GM18951 (cell line): ENCODE measurements at regions of chr5 and their contacts with region 1.

Region 1: DNA sequence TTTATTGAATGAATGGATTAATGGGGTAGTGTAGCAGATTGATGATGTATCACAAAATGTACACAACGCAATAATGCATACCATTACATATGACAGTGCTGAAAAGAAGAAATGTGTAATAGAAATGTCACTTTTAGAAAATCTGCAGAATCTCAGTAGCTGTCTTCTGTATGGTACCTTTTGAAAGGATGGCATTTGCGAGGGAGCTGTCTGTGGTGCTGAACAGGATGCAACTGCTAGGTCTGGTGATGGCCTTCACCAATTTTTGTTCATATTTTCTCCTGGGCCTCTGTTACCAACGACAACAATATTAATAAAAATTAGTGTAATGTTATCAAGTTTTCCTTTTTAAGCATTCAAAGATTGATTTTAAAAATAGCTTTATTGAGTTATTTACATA is 36.2 kb upstream of the OTULIN start:
- POLR2A ChIP-seq: no peak

Region 2: DNA sequence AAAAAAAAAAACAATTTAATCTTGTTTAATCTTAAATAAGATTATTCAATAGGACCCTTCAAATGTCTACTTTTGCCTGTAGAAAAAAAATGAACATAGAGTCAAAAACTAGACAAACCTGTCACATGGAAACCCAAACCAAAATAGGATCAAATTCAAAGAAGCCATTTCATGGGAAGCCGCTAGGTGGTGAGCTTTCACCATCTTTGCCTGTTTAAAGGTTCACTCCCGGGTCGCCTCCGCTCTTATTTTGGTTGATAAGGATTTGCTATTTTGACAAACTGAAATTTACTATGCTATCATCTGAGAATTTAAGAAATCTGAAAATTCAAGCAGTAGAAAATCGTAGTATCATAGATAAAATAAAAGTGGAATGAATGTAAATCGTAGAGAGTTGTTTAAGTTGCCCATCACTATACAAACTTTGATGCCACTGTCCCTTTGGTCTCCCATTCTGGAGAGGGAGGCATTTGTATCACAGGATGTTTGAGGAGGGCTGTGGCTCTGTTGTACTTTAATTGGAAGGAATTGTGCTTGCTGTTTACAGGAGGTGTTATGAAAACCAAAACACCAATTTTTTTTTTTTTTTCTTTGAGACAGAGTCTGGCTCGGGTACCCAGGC is 640.4 kb before region 1 on chr5:
- in situ Hi-C with region 1: loop called (anchors 25 kb)
- POLR2A ChIP-seq: no peak

Region 3: GRCh38 chr5:14405267-14405666 is 223.1 kb before region 1 on chr5:
- in situ Hi-C with region 1: loop called (anchors 25 kb)
- POLR2A ChIP-seq: no peak

Region 4: GRCh38 chr5:14743601-14744295 is 115.4 kb after region 1 on chr5:
- in situ Hi-C with region 1: no loop called
- POLR2A ChIP-seq: no peak

Region 5: GRCh38 chr5:15550502-15551112 is 922.3 kb after region 1 on chr5:
- in situ Hi-C with region 1: no loop called
- POLR2A ChIP-seq: no peak